ENCODE measurements at regions of chr9 and their contacts with region 1.

Region 1: GRCh38 chr9:71768388-71769174 is at the start of gene CEMIP2:
- DNase-seq: peak; percentile 60 to 89
- ATAC-seq: peak; percentile 80 to 88
- H3K4me3 ChIP-seq: peak within 1 kb of the TSS; percentile 94
- H3K27ac ChIP-seq: peak within 1 kb of the TSS; percentile 91 to 97
- H3K4me1 ChIP-seq: peaks cover 30% of the 10 kb centered on the region
- CTCF ChIP-seq: peak; percentile 71
- EP300 ChIP-seq: no peak
- POLR2A ChIP-seq: peak; percentile 98
- RAD21 ChIP-seq: peak; percentile 70 to 92
- polyA plus RNA-seq, gene CEMIP2: 161 and 236 TPM in 2 replicates

Region 2: DNA sequence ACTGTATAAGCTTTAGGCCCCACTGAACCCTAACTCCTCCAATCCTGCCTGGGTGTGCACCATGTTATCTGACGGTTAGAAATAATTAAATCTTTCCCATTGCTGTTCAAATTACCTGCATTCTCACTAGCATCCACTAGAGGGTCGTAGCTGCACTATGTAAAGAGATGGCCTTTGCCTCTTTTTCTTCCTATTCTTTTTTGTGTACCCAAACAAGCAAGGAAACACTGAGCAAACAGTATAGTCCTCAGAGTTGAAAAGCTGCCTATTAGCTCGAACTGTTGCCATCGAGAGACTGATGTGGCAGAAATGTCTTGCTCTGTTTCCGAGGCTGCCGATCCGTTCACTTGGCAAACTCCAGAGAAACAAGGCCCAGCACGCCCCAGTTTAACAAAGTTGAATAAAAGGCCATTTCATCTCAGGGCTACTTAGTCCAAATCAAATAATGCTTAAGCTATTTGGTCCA is 483.4 kb before region 1 on chr9:
- CTCF ChIA-PET with region 1: interaction called, 22 read pairs
- POLR2A ChIA-PET with region 1: interaction called, 4 read pairs
- DNase-seq: peak; percentile 23 to 68
- ATAC-seq: peak; percentile 83 to 93; a peak in 5 of 6 replicates
- H3K4me3 ChIP-seq: no peak overlapping the region
- H3K27ac ChIP-seq: no peak overlapping the region
- H3K4me1 ChIP-seq: no peaks in the 10 kb centered on the region
- CTCF ChIP-seq: peak; percentile 89
- EP300 ChIP-seq: no peak
- POLR2A ChIP-seq: no peak
- RAD21 ChIP-seq: peak; percentile 90 to 91

Region 3: DNA sequence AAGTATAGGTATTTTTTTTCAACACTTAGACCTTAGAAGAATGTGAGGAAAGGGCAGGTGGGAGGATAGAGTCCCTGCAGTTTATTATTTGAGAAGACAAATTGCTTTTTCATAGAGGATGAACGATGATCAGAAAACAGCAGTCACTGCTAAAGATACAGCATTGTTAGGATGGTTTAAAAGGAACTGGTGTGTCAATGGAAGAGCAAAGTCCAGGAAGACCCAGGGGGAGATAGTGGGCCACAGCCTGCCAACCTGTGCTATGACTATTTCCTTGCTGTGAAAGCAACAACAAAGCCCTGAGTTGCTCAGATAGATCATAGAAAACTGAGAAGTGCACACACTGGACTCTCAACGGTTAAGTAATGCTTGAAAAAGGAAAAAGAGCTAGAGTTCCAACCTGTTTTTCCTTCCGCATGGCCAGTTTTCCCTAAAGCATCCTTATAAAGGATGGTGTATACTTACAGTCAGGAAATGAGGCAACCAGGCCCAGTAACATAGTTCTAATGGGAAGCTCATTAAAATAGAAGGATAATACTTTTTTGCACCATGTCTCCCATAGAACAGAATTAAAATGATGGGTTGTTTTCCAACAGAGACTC is 154.1 kb before region 1 on chr9:
- CTCF ChIA-PET with region 1: interaction called, 16 read pairs
- POLR2A ChIA-PET with region 1: no interaction called
- DNase-seq: no peak
- ATAC-seq: no peak
- H3K4me3 ChIP-seq: no peak overlapping the region
- H3K27ac ChIP-seq: no peak overlapping the region
- H3K4me1 ChIP-seq: peaks cover under 1% of the 10 kb centered on the region; the same call in 1 of the 3 replicates
- CTCF ChIP-seq: no peak
- EP300 ChIP-seq: no peak
- POLR2A ChIP-seq: no peak
- RAD21 ChIP-seq: no peak

Region 4: GRCh38 chr9:71716138-71716909 is 52.3 kb before region 1 on chr9:
- CTCF ChIA-PET with region 1: interaction called, 40 read pairs
- POLR2A ChIA-PET with region 1: interaction called, 3 read pairs
- DNase-seq: no peak
- ATAC-seq: no peak
- H3K4me3 ChIP-seq: no peak overlapping the region
- H3K27ac ChIP-seq: peak overlapping the region; percentile 38 to 75; a peak in 5 of 6 replicates
- H3K4me1 ChIP-seq: peaks cover 41% of the 10 kb centered on the region
- CTCF ChIP-seq: peak; percentile 59
- EP300 ChIP-seq: no peak
- POLR2A ChIP-seq: no peak
- RAD21 ChIP-seq: peak; percentile 27 to 56

Region 5: DNA sequence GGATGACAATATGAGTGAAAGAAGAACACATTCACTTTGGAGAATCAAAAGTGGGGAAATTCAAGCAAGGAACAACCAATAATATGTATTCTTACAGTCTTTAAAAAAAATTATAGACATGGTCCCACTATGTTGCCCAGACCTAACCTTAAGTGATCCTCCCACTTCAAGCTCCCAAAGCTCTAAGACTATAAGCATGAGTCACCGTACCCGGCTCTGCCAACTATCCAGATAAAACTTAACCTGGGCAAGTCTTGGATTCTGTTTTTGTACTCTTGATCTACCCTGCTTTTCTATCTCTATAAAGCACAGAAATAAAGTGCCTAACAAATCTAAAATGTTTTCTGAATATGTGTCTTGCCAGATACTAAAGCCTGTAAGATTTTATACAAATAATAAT is 31.1 kb before region 1 on chr9:
- CTCF ChIA-PET with region 1: interaction called, 13 read pairs
- POLR2A ChIA-PET with region 1: interaction called, 8 read pairs
- DNase-seq: peak in 1 of 2 experiments; percentile 35
- ATAC-seq: peak in 1 of 2 experiments; percentile 53; a peak in 2 of 6 replicates
- H3K4me3 ChIP-seq: no peak overlapping the region
- H3K27ac ChIP-seq: peak overlapping the region; percentile 68 to 87
- H3K4me1 ChIP-seq: peaks cover 97% of the 10 kb centered on the region
- CTCF ChIP-seq: no peak
- EP300 ChIP-seq: no peak
- POLR2A ChIP-seq: no peak
- RAD21 ChIP-seq: no peak

Region 6: GRCh38 chr9:71795097-71795813 is 26.7 kb after region 1 on chr9:
- CTCF ChIA-PET with region 1: interaction called, 17 read pairs
- POLR2A ChIA-PET with region 1: interaction called, 14 read pairs
- DNase-seq: no peak
- ATAC-seq: no peak
- H3K4me3 ChIP-seq: no peak overlapping the region
- H3K27ac ChIP-seq: peak overlapping the region; percentile 84 to 88
- H3K4me1 ChIP-seq: peaks cover 63% of the 10 kb centered on the region
- CTCF ChIP-seq: no peak
- EP300 ChIP-seq: no peak
- POLR2A ChIP-seq: no peak
- RAD21 ChIP-seq: no peak

Region 7: DNA sequence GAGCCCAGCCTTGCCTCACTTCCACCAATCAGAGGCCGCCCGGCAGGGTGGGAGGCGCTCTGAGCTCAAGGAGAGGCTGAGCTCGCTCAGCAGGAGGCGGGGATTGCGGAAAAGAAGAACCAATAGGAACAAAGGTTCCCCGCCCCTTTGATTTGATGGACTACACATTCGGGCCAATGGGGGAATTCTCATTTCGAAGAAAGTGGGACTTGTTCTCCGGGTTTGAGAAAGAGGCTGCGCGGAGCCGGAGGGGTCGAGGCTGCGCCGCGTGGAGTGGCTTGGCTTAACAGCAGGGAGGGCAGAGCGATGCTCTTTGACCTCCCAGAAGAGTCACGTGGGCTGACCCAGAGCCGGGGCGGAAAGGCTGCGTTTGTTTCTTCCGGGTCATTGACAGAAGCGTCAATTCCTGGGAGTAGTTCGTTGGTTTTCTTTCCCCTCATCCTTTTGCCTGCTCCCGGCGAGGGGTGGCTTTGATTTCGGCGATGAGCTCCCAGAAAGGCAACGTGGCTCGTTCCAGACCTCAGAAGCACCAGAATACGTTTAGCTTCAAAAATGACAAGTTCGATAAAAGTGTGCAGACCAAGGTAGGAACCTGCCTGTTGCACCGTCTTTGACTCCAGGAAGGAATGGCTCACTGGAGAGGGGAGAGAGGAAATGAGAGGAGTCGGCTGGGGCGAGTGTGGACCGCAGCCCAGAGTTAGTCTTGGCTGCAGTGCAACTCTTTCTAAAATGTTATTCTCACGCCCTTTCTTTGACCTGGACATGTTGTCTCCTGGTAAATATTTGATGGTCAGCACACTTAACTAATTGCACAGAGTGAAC is 142.9 kb after region 1 on chr9 and contains the start of gene C9orf85:
- CTCF ChIA-PET with region 1: interaction called, 3 read pairs
- POLR2A ChIA-PET with region 1: interaction called, 11 read pairs
- DNase-seq: peak; percentile 96 to 99
- ATAC-seq: peak; percentile 88 to 97
- H3K4me3 ChIP-seq: peak within 1 kb of the TSS; percentile 89
- H3K27ac ChIP-seq: peak within 1 kb of the TSS; percentile 84 to 94
- H3K4me1 ChIP-seq: peaks cover 31% of the 10 kb centered on the region; the same call in 2 of the 3 replicates
- CTCF ChIP-seq: no peak
- EP300 ChIP-seq: no peak
- POLR2A ChIP-seq: peak; percentile 60
- RAD21 ChIP-seq: no peak
- polyA plus RNA-seq, gene C9orf85: 15.1 and 24.6 TPM in 2 replicates

Measured in A549 (cell line).